Transverse colon (tissue), 4 donors: ENCODE measurements at regions of chr10 and their contacts with region 1.

Region 1: GRCh38 chr10:26860443-26861204 is at the start of gene ABI1:
- DNase-seq: peak; percentile 98
- H3K4me3 ChIP-seq: peak within 1 kb of the TSS; percentile 74 to 98 (median 90)
- H3K27ac ChIP-seq: peak within 1 kb of the TSS; percentile 97 to 99 (median 98)
- H3K4me1 ChIP-seq: peaks cover 2 to 46% (median 22%) of the 10 kb centered on the region in 4 donors
- H3K27me3 ChIP-seq: no peaks in the 10 kb centered on the region
- CTCF ChIP-seq: no peak
- EP300 ChIP-seq: no peak
- POLR2A ChIP-seq: peak; percentile 99
- total RNA-seq, gene ABI1: 29.9 to 54.5 (median 47.8) TPM

Region 2: GRCh38 chr10:26725837-26726727 is 134.5 kb before region 1 on chr10:
- in situ Hi-C with region 1: loop called in 1 of 4 experiments (anchors 25 kb)
- intact Hi-C with region 1: no loop called
- DNase-seq: peak; percentile 63
- H3K4me3 ChIP-seq: no peak overlapping the region
- H3K27ac ChIP-seq: no peak overlapping the region
- H3K4me1 ChIP-seq: peaks cover 0 to 3% (median 1%) of the 10 kb centered on the region in 4 donors
- H3K27me3 ChIP-seq: no peaks in the 10 kb centered on the region
- CTCF ChIP-seq: peak; percentile 75 to 86 (median 80)
- EP300 ChIP-seq: no peak
- POLR2A ChIP-seq: no peak

Region 3: GRCh38 chr10:26743091-26743490 is 117.5 kb before region 1 on chr10:
- in situ Hi-C with region 1: loop called in 2 of 4 experiments (anchors 10 to 25 kb)
- intact Hi-C with region 1: no loop called
- DNase-seq: no peak
- H3K4me3 ChIP-seq: no peak overlapping the region
- H3K27ac ChIP-seq: no peak overlapping the region
- H3K4me1 ChIP-seq: peaks cover 0 to 4% (median 0%) of the 10 kb centered on the region in 4 donors
- H3K27me3 ChIP-seq: no peaks in the 10 kb centered on the region
- CTCF ChIP-seq: no peak
- EP300 ChIP-seq: no peak
- POLR2A ChIP-seq: no peak

Region 4: DNA sequence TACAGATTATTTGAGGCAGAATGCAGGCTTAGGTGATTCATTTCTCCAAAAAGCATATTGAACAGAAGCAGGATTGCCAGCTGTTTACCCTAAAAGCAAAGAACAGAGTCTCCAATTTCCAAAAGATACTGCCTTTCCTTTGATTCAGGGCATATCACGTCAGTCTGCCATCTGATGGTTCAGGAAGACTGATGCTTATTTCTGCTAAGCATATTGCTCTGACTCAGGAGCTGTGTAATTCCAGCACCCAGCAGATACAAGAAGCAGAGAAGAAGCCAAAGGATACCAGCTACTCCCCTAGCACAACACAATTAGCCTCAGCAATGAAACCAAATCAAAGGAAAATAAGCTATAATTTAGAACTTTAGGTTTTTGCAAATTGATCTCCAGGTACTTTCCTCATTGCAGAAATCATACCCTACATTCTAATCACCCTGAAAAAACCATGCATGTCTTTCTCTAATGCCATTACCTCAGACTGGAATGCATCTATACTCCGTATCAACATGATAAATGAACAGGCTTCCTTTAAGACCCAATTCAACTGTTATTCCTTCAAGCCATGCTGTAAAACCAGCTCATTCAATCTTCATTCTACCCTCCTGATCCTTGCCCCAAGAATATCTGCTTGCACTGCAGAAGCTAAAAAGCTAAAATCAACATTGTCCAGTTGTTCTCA is 54.9 kb before region 1 on chr10:
- in situ Hi-C with region 1: loop called in 1 of 4 experiments (anchors 10 kb)
- intact Hi-C with region 1: no loop called
- DNase-seq: no peak
- H3K4me3 ChIP-seq: no peak overlapping the region
- H3K27ac ChIP-seq: no peak overlapping the region
- H3K4me1 ChIP-seq: peaks cover 13 to 48% (median 20%) of the 10 kb centered on the region in 4 donors
- H3K27me3 ChIP-seq: no peaks in the 10 kb centered on the region
- CTCF ChIP-seq: no peak
- EP300 ChIP-seq: no peak
- POLR2A ChIP-seq: no peak